Dorsolateral prefrontal cortex (tissue), 120 donors: ENCODE measurements at regions of chr6 and their contacts with region 1.

Region 1: DNA sequence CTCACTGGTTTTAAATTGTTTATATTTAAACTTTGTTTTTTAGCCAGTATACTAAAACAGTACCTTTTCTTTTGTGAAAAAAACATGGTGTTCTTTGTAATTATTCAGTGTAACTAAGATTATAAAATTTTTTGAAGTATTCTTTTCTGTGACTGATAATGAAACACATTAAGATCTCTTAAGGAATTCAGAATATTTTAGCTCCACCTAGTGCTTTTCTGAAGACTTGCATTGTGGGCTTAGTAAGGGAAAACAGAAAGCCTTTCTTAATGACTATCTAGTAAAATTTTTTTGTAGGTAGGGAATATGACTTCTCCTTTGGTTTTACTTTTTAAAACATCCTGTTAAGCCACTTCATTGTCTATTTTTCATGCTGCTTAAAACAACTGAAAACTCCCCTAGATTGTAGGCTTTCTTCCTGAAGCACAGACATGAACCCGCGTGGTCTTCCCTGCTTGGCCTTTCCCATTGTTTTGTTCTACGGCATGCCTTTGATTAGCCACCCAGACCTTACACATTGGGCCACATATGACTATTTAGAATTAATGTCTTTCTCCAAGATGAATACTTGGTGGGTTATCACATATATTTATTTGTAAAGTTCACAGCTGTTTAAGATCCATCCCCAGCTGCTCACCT is 72.1 kb downstream of the AFDN start:
- DNase-seq: no peak
- H3K4me3 ChIP-seq: no peak overlapping the region
- H3K27ac ChIP-seq: no peak overlapping the region
- H3K27me3 ChIP-seq: no peaks in the 10 kb centered on the region
- CTCF ChIP-seq: peak; percentile 67 to 94 (median 83)

Region 2: GRCh38 chr6:167485186-167485978 is 413.4 kb before region 1 on chr6:
- intact Hi-C with region 1: loop called (anchors 2 to 5 kb)
- DNase-seq: peak in 1 of 10 donors; percentile 53
- H3K4me3 ChIP-seq: no peak overlapping the region
- H3K27ac ChIP-seq: no peak overlapping the region
- H3K27me3 ChIP-seq: peaks cover 0 to 5% (median 0%) of the 10 kb centered on the region in 45 donors
- CTCF ChIP-seq: peak; percentile 28 to 90 (median 70)

Region 3: DNA sequence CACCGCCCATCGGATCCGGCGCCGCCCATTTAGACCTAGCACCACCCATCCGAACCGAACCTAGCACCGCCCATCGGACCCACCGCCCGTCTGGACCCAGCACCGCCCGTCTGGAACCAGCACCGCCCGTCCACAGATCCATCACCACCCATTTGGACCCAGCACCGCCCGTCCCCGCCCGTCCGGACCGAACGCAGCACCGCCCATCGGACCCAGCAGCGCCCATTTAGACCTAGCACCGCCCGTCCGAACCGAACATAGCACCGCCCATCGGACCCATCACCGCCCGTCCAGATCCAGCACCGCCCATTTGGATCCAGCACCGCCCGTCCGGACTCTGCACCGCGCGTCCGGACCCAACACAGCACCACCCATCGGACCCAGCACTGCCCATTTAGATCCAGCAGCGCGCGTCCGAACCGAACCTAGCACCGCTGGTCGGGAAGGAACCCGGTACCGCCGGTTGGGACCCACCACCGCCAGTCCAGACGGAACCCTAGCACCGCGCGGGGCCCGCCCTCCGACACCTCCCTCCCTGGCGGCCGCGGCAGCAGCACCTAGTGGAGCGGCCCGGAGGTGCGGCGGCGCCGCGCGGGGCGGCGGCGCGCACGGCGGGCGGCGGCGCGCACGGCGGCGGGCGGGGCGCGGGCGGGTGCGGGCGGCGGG is 72.4 kb before region 1 on chr6:
- intact Hi-C with region 1: loop called (anchors 2 to 10 kb)
- DNase-seq: peak; percentile 52 to 84 (median 74)
- H3K4me3 ChIP-seq: peak overlapping the region; percentile 37 to 89 (median 74)
- H3K27ac ChIP-seq: peak overlapping the region in 43 of 59 donors; percentile 42 to 87 (median 74)
- H3K27me3 ChIP-seq: no peaks in the 10 kb centered on the region
- CTCF ChIP-seq: peak in 46 of 56 donors; percentile 9 to 53 (median 28)